ENCODE measurements at regions of chr6 and their contacts with region 1.

Region 1: GRCh38 chr6:142946181-142946923 is 1.4 kb upstream of the HIVEP2 start:
- DNase-seq: peak; percentile 99
- ATAC-seq: peak; percentile 91 to 93
- H3K4me3 ChIP-seq: peak overlapping the region; percentile 88
- H3K27ac ChIP-seq: peak overlapping the region; percentile 99
- H3K4me1 ChIP-seq: no peaks in the 10 kb centered on the region
- H3K27me3 ChIP-seq: no peaks in the 10 kb centered on the region

Region 2: GRCh38 chr6:142692942-142693341 is 253.4 kb before region 1 on chr6:
- intact Hi-C with region 1: loop called in 1 of 4 experiments (anchors 10 kb)
- DNase-seq: peak; percentile 61 to 70 (median 61)
- ATAC-seq: peak; percentile 69 to 85
- H3K4me3 ChIP-seq: no peak overlapping the region
- H3K27ac ChIP-seq: no peak overlapping the region
- H3K4me1 ChIP-seq: no peaks in the 10 kb centered on the region
- H3K27me3 ChIP-seq: no peaks in the 10 kb centered on the region

Region 3: DNA sequence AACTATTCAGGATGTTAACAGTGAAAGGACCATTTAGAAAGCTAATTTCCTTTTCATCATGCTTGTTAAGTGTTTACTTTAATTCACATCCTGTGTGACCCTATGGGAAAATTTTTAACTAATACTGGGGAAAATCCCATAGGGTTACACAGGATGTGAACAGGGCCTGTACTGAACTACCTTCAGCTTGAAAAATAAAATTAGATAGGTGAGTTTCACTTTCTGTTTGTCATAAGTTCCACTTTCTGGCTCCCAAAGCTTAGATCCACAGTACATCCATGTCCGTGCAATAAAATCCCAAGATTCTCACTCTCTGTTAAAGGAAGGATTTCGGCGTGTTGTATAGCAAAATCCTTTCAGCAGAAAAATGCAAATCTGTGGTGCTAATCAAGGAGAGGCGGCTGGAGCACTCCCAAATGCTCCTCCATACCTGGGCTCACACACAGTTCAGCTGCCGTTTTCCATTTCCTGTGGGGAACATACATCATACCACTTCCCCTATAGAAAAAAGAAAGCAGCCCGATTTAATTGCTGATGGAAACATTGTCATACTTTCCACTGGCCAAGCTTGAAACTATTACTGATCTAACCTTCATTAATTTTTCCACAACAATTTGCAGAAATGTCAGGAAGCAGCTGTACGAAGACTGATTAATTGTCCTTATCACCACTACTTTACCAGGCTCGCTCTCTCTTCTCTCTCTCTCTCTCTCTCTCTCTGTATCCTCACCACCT is 126.6 kb before region 1 on chr6:
- intact Hi-C with region 1: loop called in 1 of 4 experiments (anchors 10 kb)
- DNase-seq: peak in 1 of 3 donors; percentile 38
- ATAC-seq: peak; percentile 48 to 73
- H3K4me3 ChIP-seq: peak overlapping the region; percentile 86
- H3K27ac ChIP-seq: peak overlapping the region; percentile 50
- H3K4me1 ChIP-seq: peaks cover 14% of the 10 kb centered on the region
- H3K27me3 ChIP-seq: no peaks in the 10 kb centered on the region

Region 4: GRCh38 chr6:142885182-142885867 is 61.0 kb before region 1 on chr6:
- intact Hi-C with region 1: loop called in 3 of 4 experiments (anchors 10 kb)
- DNase-seq: no peak
- ATAC-seq: peak; percentile 91 to 94
- H3K4me3 ChIP-seq: peak overlapping the region; percentile 71
- H3K27ac ChIP-seq: peak overlapping the region; percentile 77
- H3K4me1 ChIP-seq: peaks cover 2% of the 10 kb centered on the region
- H3K27me3 ChIP-seq: no peaks in the 10 kb centered on the region

Region 5: DNA sequence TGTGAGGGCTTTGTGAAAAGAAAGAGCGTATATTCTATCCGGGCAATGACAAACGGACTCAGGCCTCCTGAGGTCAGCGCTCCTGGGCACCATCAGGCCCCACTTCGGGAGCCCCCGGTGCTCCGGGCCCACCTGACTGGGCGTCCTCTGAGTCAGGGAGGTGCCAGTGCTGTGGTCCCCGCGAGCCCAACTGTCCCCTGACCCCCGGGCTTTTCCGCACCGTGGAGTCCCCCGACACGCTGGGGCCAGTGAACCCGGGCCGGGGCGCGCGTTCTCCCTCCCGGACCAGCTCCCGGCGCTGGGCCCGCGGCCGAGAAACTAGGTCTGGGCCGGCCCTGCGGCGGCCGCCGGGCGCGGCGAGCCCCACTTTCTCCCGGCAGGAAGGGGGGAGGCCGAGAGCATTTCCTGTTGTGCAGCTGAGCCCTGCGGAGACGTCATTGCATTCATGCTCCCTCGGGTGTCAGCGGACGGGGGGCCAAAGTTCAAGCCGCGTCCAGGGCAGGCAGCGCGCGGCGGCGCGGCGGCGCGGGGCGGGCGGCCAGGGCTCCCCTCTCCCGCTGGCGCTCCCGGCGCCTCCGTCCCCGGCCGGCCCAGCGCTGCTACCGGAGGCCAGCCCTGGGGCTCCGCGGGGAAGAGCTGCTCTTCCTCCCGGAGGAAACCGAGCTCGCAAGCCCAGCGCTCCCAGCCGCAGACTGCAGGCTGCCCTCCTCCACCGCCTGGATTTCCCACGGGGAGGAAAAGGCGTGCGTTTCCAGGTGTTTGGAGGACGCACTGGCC is 19.7 kb before region 1 on chr6:
- intact Hi-C with region 1: loop called in 1 of 4 experiments (anchors 2 kb)
- DNase-seq: peak; percentile 91 to 94 (median 94)
- ATAC-seq: peak; percentile 97 to 98
- H3K4me3 ChIP-seq: peak overlapping the region; percentile 60
- H3K27ac ChIP-seq: peak overlapping the region; percentile 97
- H3K4me1 ChIP-seq: peaks cover 2% of the 10 kb centered on the region
- H3K27me3 ChIP-seq: no peaks in the 10 kb centered on the region

Measured in right cardiac atrium (tissue), 5 donors.